Left colon (tissue), 2 donors: ENCODE measurements at regions of chr9 and their contacts with region 1.

Region 1: GRCh38 chr9:122991370-122991830 is 42.1 kb upstream of the GPR21 start:
- DNase-seq: peak in 1 of 2 donors; percentile 13
- ATAC-seq: peak; percentile 79

Region 2: DNA sequence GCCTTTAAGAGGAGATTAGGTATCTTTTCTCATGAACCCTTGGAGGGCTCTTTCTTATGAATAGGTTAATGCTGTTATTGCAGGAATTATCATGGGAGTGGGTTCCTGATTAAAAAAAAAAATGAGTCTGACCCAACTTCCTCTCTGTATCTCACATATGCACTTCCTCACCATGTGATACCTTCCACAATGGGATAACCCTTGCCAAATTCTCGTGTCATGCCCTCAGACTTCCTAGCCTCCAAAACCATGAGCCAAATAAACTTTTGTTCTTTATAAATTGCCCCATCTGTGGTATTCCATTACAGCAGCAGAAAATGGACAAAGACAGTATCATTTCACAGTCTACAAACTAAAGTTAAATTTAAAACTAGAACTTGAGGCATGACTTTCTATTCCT is 335.0 kb before region 1 on chr9:
- intact Hi-C with region 1: no loop called
- DNase-seq: no peak
- ATAC-seq: no peak

Region 3: GRCh38 chr9:122846371-122846940 is 144.9 kb before region 1 on chr9:
- intact Hi-C with region 1: loop called in 1 of 2 experiments (anchors 10 kb)
- DNase-seq: no peak
- ATAC-seq: no peak